Activated T-helper 2 cell treated with anti-CD3 and anti-CD28 coated beads, Interferon-gamma antibody, Interleukin-2, Interleukin-4, amounts not matched to agents 10 μg/mL and 5 μg/mL and 100 μg/mL, durations not matched to agents 14 hours and 24 hours and 36 hours (primary cell): ENCODE measurements at regions of chr7 and their contacts with region 1.

Region 1: GRCh38 chr7:23357190-23358093 is 58.3 kb downstream of the MALSU1 start:
- DNase-seq: no peak
- H3K4me3 Mint-ChIP-seq: peak overlapping the region; percentile 22
- H3K27ac Mint-ChIP-seq: peak overlapping the region; percentile 83
- H3K4me1 Mint-ChIP-seq: peaks cover 62% of the 10 kb centered on the region
- H3K27me3 Mint-ChIP-seq: no peaks in the 10 kb centered on the region

Region 2: DNA sequence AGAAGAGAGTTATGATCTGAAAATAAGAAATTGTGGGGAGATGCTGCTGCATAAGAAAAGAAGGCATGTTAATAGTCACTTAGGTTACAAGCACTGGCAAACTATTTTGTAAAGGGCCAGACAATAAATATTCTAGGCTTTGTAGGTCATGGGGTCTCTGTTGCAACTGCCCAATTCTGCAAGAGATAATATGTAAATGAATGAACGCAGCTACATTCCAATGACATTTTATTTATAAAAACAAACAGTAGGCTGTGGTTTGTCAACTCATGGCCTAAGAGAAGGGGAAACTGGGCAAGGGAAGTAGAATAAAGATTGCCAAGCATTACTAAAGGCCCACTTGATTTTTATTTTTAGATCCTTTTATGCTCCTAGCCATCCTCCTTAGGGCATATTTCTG is 1133.6 kb before region 1 on chr7:
- intact Hi-C with region 1: no loop called
- DNase-seq: no peak
- H3K4me3 Mint-ChIP-seq: no peak overlapping the region
- H3K27ac Mint-ChIP-seq: no peak overlapping the region
- H3K4me1 Mint-ChIP-seq: no peaks in the 10 kb centered on the region
- H3K27me3 Mint-ChIP-seq: peaks cover 5% of the 10 kb centered on the region

Region 3: GRCh38 chr7:23306936-23307521 is 50.4 kb before region 1 on chr7:
- intact Hi-C with region 1: loop called (anchors 2 kb)
- DNase-seq: no peak
- H3K4me3 Mint-ChIP-seq: no peak overlapping the region
- H3K27ac Mint-ChIP-seq: peak overlapping the region; percentile 53
- H3K4me1 Mint-ChIP-seq: peaks cover 37% of the 10 kb centered on the region
- H3K27me3 Mint-ChIP-seq: no peaks in the 10 kb centered on the region

Region 4: DNA sequence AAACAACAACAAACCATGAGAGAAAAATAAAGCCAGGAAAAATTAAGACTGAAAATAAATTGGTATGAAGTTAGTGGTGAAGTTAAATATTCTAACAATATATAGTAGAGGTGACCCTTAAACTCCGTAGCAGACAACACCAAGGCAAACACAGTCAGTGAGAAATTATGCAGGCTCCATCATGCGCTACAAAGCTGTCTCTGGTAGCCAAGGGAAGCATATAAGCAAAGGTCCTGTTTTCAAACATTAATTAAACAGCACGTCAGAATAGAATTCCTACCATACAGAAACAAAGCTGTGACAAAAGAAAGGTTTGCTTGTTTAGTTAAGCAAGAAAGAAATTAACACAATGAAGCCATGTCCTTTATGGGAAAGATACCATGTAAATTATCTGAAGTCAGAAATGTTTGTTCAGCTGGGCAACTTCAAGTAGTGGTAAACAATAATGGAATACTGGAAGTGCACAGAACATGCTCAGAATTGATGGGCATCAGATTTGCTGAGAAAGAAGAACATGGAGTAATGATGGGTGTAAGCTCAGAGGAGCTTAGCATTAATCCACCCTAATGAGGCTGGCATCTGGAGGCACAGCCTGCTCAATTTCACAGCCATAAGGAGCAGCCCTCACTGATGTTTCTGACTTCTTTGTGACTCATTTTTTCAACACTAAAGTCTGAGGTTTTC is 37.2 kb after region 1 on chr7:
- intact Hi-C with region 1: loop called (anchors 1 kb)
- DNase-seq: no peak
- H3K4me3 Mint-ChIP-seq: no peak overlapping the region
- H3K27ac Mint-ChIP-seq: no peak overlapping the region
- H3K4me1 Mint-ChIP-seq: peaks cover 17% of the 10 kb centered on the region
- H3K27me3 Mint-ChIP-seq: no peaks in the 10 kb centered on the region

Region 5: DNA sequence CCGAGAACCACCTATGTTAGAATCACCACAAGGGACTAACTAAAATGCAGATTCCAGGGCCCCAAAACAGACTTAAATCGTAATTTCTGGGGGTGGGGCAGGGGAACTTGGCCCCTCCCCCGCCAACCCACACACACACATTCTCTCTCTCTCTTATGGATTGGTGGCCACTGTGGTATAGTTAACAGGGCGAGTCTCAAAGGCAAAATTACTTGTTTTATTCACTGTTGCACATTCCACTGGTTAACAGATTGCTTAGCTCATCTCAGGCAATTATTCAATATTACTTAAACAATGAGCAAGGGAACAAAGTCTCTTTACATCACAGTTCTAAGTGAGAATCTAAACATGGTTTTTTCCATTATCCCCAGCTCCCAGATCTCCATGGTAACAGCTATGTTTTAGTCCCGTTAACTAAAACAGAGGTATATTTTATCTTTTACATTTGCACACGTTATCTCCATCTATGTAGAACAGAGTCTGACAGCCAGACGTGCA is 74.3 kb after region 1 on chr7:
- intact Hi-C with region 1: loop called (anchors 2 kb)
- DNase-seq: no peak
- H3K4me3 Mint-ChIP-seq: no peak overlapping the region
- H3K27ac Mint-ChIP-seq: no peak overlapping the region
- H3K4me1 Mint-ChIP-seq: peaks cover 44% of the 10 kb centered on the region
- H3K27me3 Mint-ChIP-seq: no peaks in the 10 kb centered on the region

Region 6: GRCh38 chr7:23531794-23532489 is 174.5 kb after region 1 on chr7 and contains the start of gene TRA2A:
- intact Hi-C with region 1: loop called (anchors 5 kb)
- DNase-seq: peak; percentile 94
- H3K4me3 Mint-ChIP-seq: peak within 1 kb of the TSS; percentile 97
- H3K27ac Mint-ChIP-seq: peak within 1 kb of the TSS; percentile 99
- H3K4me1 Mint-ChIP-seq: peaks cover 39% of the 10 kb centered on the region
- H3K27me3 Mint-ChIP-seq: no peaks in the 10 kb centered on the region
- total RNA-seq, gene TRA2A: 105 and 115 TPM in 2 replicates

Region 7: GRCh38 chr7:24786941-24787340 is 1429.5 kb after region 1 on chr7:
- intact Hi-C with region 1: no loop called
- DNase-seq: no peak
- H3K4me3 Mint-ChIP-seq: no peak overlapping the region
- H3K27ac Mint-ChIP-seq: no peak overlapping the region
- H3K4me1 Mint-ChIP-seq: peaks cover 10% of the 10 kb centered on the region
- H3K27me3 Mint-ChIP-seq: no peaks in the 10 kb centered on the region